Heart right ventricle (tissue), 16 donors: ENCODE measurements at regions of chr17 and their contacts with region 1.

Region 1: GRCh38 chr17:67376737-67377487 is at the start of gene PITPNC1:
- DNase-seq: peak; percentile 87 to 89
- ATAC-seq: peak; percentile 80 to 89 (median 84)
- H3K4me3 ChIP-seq: peak within 1 kb of the TSS; percentile 73 to 95 (median 92)
- H3K27ac ChIP-seq: peak within 1 kb of the TSS; percentile 93 to 97 (median 96)
- H3K4me1 ChIP-seq: peaks cover 5 to 43% (median 22%) of the 10 kb centered on the region in 9 donors
- H3K27me3 ChIP-seq: no peaks in the 10 kb centered on the region
- CTCF ChIP-seq: peak in 4 of 9 donors; percentile 12 to 24 (median 20)
- total RNA-seq, gene PITPNC1: 7.4 to 28.0 (median 11.5) TPM

Region 2: DNA sequence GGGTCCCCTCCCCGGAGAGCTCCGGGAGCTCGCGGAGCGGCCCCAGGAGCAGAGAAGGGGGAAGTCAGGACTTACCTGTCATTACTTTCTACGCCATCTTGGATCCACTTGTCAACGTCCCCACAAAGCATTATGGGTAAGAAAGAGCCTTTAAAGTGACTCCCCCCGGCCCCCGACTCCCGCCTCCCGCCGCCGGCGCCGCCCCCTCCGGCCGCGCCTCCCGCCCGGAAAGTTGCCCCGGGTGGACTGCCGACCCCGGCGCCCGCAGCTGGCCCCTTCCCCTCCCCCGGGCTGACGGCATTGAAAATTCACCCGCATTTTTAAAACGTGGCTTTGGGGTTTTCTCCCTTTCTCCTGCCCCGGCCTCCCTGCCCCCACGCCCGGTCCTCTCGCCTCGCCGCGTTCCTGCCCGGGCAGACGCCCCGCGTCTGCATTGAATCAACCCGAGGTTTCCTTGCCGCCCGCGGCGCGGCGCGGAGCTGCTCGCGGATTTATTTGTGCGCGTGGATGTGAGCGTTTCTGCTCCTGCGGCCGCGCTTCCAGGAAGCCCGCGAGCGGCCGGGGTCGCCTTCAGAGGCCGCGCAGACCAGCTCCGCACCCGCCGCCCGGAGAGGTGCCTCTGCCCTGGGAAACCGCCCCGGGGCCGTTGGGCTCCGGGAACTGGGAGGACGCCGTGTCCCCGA is 131.7 kb before region 1 on chr17 and contains the start of gene HELZ:
- intact Hi-C with region 1: no loop called
- DNase-seq: peak; percentile 80 to 81
- ATAC-seq: peak; percentile 87 to 92 (median 90)
- H3K4me3 ChIP-seq: peak within 1 kb of the TSS; percentile 76 to 100 (median 98)
- H3K27ac ChIP-seq: peak within 1 kb of the TSS; percentile 65 to 97 (median 92)
- H3K4me1 ChIP-seq: peaks cover 5 to 55% (median 46%) of the 10 kb centered on the region in 9 donors
- H3K27me3 ChIP-seq: no peaks in the 10 kb centered on the region
- CTCF ChIP-seq: no peak
- total RNA-seq, gene HELZ: 27.4 to 50.3 (median 41.7) TPM

Region 3: DNA sequence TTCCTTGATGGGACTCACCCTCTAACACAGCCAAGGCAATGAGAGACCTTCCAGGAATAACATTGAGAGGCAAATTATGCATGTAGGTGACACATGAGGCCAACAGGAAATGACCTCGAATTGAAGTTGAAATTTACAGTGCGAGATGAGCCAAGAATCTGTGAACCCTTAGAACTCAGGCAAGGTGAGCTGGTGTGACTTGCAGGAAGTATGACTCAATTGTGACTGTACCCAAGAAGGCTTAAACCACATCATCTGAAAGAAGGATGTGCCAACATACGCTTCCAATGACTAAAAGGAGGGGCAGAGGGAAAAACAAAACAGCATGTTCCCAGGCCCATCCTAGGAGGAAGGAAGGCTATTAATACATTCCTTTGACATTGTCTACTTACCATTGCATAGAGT is 45.0 kb after region 1 on chr17:
- intact Hi-C with region 1: loop called in 1 of 10 experiments (anchors 5 kb)
- DNase-seq: peak in 1 of 2 donors; percentile 21
- ATAC-seq: peak; percentile 61 to 94 (median 87)
- H3K4me3 ChIP-seq: no peak overlapping the region
- H3K27ac ChIP-seq: peak overlapping the region; percentile 38 to 83 (median 68)
- H3K4me1 ChIP-seq: peaks cover 0 to 47% (median 9%) of the 10 kb centered on the region in 9 donors
- H3K27me3 ChIP-seq: no peaks in the 10 kb centered on the region
- CTCF ChIP-seq: no peak

Region 4: DNA sequence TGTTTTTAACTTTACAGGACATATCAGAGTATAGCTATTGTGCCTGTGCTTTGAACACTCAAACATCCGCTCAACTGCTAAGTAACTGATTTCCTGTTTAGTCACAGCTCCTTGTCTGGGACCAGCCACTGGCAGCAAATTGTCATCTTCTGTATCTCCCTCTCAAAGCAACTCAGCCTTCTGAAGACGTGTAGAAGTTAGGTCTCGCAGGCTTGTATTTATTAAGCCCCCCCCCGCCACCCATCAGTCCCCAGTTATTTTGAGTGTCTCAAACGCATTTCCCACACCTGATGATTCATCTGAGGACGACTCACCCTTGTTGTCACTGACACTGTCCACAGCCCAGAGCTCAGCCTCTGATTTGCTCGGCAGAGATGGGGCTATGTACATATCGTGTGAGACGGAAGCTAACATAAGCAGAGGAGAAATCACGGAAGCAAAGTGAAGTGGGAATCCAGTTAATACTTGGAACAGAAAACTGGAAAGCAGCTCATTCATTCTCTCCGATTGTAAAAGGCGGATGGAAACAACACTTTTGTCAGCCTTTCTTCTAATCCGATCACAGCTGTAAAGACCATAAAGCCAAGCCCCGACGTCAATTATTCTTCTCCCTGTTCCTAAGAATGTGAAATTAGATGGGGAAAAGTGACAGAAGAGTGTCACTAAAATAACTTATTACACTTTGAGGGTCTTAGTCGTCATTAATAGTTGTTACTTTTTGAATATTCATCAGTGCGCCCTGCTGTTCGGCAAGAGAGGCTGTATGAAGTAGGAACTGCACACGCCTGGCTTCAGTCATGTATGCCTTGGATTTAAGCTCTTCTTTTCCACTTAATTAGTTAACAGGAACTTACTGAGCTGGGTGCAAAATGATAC is 64.4 kb after region 1 on chr17:
- intact Hi-C with region 1: no loop called
- DNase-seq: peak in 1 of 2 donors; percentile 21
- ATAC-seq: peak; percentile 32 to 82 (median 50)
- H3K4me3 ChIP-seq: peak overlapping the region in 4 of 10 donors; percentile 9 to 34 (median 24)
- H3K27ac ChIP-seq: peak overlapping the region; percentile 34 to 87 (median 60)
- H3K4me1 ChIP-seq: peaks cover 0 to 89% (median 63%) of the 10 kb centered on the region in 9 donors
- H3K27me3 ChIP-seq: no peaks in the 10 kb centered on the region
- CTCF ChIP-seq: no peak

Region 5: GRCh38 chr17:67491009-67491680 is 114.2 kb after region 1 on chr17:
- intact Hi-C with region 1: loop called in 1 of 10 experiments (anchors 5 kb)
- DNase-seq: peak; percentile 88 to 89
- ATAC-seq: peak; percentile 92 to 99 (median 95)
- H3K4me3 ChIP-seq: peak overlapping the region in 8 of 10 donors; percentile 8 to 49 (median 38)
- H3K27ac ChIP-seq: peak overlapping the region in 9 of 10 donors; percentile 35 to 81 (median 73)
- H3K4me1 ChIP-seq: peaks cover 0 to 60% (median 47%) of the 10 kb centered on the region in 9 donors
- H3K27me3 ChIP-seq: no peaks in the 10 kb centered on the region
- CTCF ChIP-seq: no peak

Region 6: DNA sequence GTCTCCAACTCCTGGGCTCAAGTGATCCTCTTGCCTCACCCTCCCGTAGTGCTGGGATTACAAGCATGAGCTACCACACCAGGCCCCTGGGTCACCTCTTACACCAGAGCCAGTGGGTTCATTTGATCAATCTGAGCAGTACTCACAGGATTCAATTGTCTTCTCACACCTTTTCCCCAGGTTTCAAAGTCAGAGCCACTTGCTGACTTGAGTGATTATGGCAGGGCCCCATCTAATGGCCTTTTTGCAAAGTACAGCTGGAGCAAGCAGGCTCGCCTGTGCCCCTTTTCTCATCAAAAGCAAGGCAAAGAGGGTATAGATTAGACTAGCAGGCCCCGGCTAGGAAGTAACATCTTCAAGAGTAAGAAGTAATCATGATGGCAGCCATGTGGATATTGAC is 226.0 kb after region 1 on chr17:
- intact Hi-C with region 1: loop called in 8 of 10 experiments (anchors 5 to 10 kb)
- DNase-seq: no peak
- ATAC-seq: no peak
- H3K4me3 ChIP-seq: no peak overlapping the region
- H3K27ac ChIP-seq: peak overlapping the region in 1 of 10 donors; percentile 5
- H3K4me1 ChIP-seq: peaks cover 0 to 58% (median 36%) of the 10 kb centered on the region in 9 donors
- H3K27me3 ChIP-seq: no peaks in the 10 kb centered on the region
- CTCF ChIP-seq: peak in 7 of 9 donors; percentile 29 to 48 (median 36)

Region 7: DNA sequence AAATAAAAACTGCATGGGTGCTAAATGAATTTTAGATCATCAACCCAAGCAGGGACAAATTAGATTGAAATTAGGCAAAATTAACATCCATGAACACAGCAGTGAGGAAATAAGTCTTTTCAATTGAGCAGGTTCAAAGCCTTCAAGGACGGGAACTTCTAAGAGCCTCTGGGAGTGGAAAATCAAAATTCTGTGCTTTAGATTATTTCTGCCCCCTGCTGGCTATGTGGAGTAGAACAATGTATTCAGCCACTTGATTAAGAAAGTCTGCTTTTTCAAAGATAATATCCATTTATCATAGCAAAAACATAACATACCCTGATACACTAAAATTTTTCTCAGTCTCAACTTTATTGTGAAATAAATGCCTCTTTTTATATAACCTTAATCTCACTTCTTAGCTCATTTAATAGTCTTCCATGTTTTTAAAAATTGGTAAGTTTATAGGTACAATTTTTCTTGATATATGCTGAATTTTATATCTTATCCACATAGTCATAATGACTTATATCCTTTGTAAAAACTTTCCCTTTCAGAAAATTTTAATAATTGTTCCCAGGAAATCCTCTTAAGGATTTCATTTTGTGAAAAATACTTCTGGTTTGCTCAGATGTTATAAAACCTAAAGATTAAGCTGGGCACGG is 312.7 kb after region 1 on chr17:
- intact Hi-C with region 1: loop called (anchors 1 to 5 kb)
- DNase-seq: peak in 1 of 2 donors; percentile 73
- ATAC-seq: peak in 2 of 8 donors; percentile 51 to 62
- H3K4me3 ChIP-seq: no peak overlapping the region
- H3K27ac ChIP-seq: no peak overlapping the region
- H3K4me1 ChIP-seq: peaks cover 0 to 16% (median 0%) of the 10 kb centered on the region in 9 donors
- H3K27me3 ChIP-seq: no peaks in the 10 kb centered on the region
- CTCF ChIP-seq: peak; percentile 77 to 88 (median 82)